CD4-positive, alpha-beta T cell (primary cell): ENCODE measurements at regions of chr10 and their contacts with region 1.

Region 1: DNA sequence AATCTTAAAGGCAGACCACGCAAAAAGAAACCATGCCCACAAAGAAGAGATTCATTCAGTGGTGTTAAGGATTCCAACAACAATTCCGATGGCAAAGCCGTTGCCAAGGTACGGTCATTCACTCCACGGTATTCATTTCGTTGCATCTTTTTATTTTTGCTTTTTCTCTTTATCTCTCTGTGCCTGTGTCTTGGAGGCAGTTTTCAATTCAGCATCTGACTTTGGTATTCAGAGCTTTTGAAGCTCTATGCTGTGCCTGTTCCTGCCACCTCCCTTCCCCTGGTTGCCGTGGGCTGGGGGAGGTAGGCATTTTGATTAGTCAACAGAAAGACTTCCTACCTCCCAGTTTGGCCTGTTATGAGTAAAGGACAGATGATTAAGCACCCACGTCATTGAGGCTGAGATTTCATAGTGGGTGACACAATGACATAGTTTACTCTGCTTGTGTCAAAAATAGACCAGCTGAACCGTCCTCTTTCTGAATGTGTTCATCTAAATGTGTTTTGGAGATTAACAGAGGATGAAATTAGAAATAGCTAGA is 149.5 kb downstream of the ARID5B start:
- DNase-seq: peak; percentile 54 to 93 (median 72)
- ATAC-seq: peak; percentile 81
- H3K4me3 ChIP-seq: peak overlapping the region; percentile 60
- H3K4me3 Mint-ChIP-seq: peak overlapping the region; percentile 83
- H3K27ac ChIP-seq: peak overlapping the region; percentile 83 to 87
- H3K27ac Mint-ChIP-seq: peak overlapping the region; percentile 91
- H3K4me1 ChIP-seq: peaks cover 64% of the 10 kb centered on the region
- H3K4me1 Mint-ChIP-seq: peaks cover 97% of the 10 kb centered on the region
- H3K27me3 ChIP-seq: no peaks in the 10 kb centered on the region
- H3K27me3 Mint-ChIP-seq: no peaks in the 10 kb centered on the region
- CTCF ChIP-seq: no peak

Region 2: GRCh38 chr10:62038609-62039190 is 12.3 kb before region 1 on chr10:
- CTCF ChIA-PET with region 1: interaction called, 32 read pairs
- POLR2A ChIA-PET with region 1: interaction called, 56 read pairs
- intact Hi-C with region 1: loop called in 1 of 2 experiments (anchors 1 kb)
- DNase-seq: peak; percentile 65 to 88 (median 72)
- ATAC-seq: peak; percentile 84
- H3K4me3 ChIP-seq: peak overlapping the region; percentile 29
- H3K4me3 Mint-ChIP-seq: peak overlapping the region; percentile 72
- H3K27ac ChIP-seq: no peak overlapping the region
- H3K27ac Mint-ChIP-seq: peak overlapping the region; percentile 68
- H3K4me1 ChIP-seq: peaks cover 54% of the 10 kb centered on the region
- H3K4me1 Mint-ChIP-seq: peaks cover 87% of the 10 kb centered on the region
- H3K27me3 ChIP-seq: no peaks in the 10 kb centered on the region
- H3K27me3 Mint-ChIP-seq: no peaks in the 10 kb centered on the region
- CTCF ChIP-seq: peak; percentile 82

Region 3: GRCh38 chr10:62082729-62083411 is 31.9 kb after region 1 on chr10:
- CTCF ChIA-PET with region 1: no interaction called
- POLR2A ChIA-PET with region 1: interaction called, 24 read pairs
- intact Hi-C with region 1: loop called in 1 of 2 experiments (anchors 2 kb)
- DNase-seq: peak in 12 of 14 experiments; percentile 17 to 83 (median 36)
- ATAC-seq: peak; percentile 88
- H3K4me3 ChIP-seq: peak overlapping the region; percentile 32
- H3K4me3 Mint-ChIP-seq: peak overlapping the region; percentile 42
- H3K27ac ChIP-seq: peak overlapping the region; percentile 31 to 80
- H3K27ac Mint-ChIP-seq: peak overlapping the region; percentile 82
- H3K4me1 ChIP-seq: peaks cover 34% of the 10 kb centered on the region
- H3K4me1 Mint-ChIP-seq: peaks cover 65% of the 10 kb centered on the region
- H3K27me3 ChIP-seq: no peaks in the 10 kb centered on the region
- H3K27me3 Mint-ChIP-seq: no peaks in the 10 kb centered on the region
- CTCF ChIP-seq: no peak

Region 4: GRCh38 chr10:62244780-62245467 is 194.0 kb after region 1 on chr10:
- CTCF ChIA-PET with region 1: interaction called, 12 read pairs
- POLR2A ChIA-PET with region 1: interaction called, 5 read pairs
- intact Hi-C with region 1: no loop called
- DNase-seq: peak in 11 of 14 experiments; percentile 15 to 82 (median 35)
- ATAC-seq: peak; percentile 92
- H3K4me3 ChIP-seq: no peak overlapping the region
- H3K4me3 Mint-ChIP-seq: peak overlapping the region; percentile 5
- H3K27ac ChIP-seq: no peak overlapping the region
- H3K27ac Mint-ChIP-seq: peak overlapping the region; percentile 18
- H3K4me1 ChIP-seq: peaks cover 4% of the 10 kb centered on the region
- H3K4me1 Mint-ChIP-seq: peaks cover 39% of the 10 kb centered on the region
- H3K27me3 ChIP-seq: no peaks in the 10 kb centered on the region
- H3K27me3 Mint-ChIP-seq: no peaks in the 10 kb centered on the region
- CTCF ChIP-seq: peak; percentile 92